ENCODE measurements at regions of chr6 and their contacts with region 1.

Region 1: DNA sequence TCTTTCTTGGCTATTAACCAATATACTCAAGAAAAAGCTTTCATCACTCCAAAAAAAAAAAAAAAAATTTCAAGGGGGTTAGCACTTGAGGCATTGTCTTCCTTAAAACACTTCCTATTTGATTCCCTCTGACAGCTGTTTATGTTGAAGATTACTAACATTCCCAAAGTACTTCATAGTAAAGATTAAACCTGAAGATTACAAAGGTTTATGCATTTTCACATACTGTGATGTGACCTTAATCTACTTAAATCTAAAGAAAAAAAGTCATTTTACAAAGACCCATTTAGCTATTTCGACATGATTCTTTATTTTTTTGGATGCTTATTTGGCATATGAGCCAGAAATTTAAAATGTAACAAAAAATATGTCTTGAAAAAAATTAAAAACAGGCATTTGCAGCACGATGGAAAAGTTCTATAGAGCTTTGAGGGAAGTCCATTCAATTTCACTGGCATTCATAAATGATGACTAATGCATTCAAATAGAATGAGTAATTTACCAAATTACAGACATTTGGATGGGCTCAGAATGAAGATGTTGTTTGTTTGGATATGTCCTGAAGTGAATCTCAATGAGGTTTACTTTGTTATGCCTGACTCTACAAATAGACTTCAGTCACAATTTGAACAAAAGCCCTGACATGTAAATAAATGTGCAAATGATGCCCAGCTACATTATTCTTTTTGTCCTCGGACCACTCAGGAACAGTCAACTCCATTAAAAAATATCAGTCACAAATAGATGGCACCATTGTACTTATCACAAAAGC is 674.6 kb upstream of the MARCKS start:
- DNase-seq: peak; percentile 82
- H3K4me3 ChIP-seq: peak overlapping the region in 1 of 3 experiments; percentile 38
- H3K27ac ChIP-seq: peak overlapping the region; percentile 87
- H3K4me1 ChIP-seq: peaks cover 29% of the 10 kb centered on the region
- H3K27me3 ChIP-seq: no peaks in the 10 kb centered on the region
- CTCF ChIP-seq: no peak
- POLR2A ChIP-seq: no peak

Region 2: DNA sequence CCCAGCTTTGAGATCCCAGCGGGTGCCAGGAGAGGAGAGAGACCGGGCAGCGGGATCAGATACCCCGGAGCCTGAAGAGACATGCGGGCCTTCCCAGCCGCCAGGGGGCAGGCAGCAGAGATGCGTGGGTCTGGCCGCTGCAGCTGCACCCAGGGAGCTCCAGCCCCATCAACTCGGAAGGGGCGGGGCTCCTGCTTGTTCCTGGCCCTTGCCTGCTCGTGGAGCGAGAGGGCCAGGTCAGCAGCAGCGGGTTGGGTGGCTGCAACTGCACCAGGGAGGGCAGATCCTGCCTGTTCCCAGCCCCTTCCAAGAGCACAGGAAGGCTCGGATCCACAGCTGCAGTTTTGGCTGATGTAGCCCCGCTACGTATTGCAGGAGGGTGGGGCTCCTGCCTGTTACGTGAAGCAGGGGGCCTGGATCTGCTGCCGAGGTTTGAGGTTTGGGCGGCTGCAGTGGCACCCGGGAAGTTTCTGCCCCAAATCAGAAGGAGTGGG is 302.6 kb before region 1 on chr6:
- CTCF ChIA-PET with region 1: no interaction called
- POLR2A ChIA-PET with region 1: no interaction called
- dilution Hi-C with region 1: no loop called
- intact Hi-C with region 1: loop called (anchors 5 kb)
- DNase-seq: no peak
- H3K4me3 ChIP-seq: no peak overlapping the region
- H3K27ac ChIP-seq: no peak overlapping the region
- H3K4me1 ChIP-seq: peaks cover 23% of the 10 kb centered on the region
- H3K27me3 ChIP-seq: no peaks in the 10 kb centered on the region
- CTCF ChIP-seq: no peak
- POLR2A ChIP-seq: no peak

Region 3: GRCh38 chr6:113018351-113019151 is 164.0 kb before region 1 on chr6:
- CTCF ChIA-PET with region 1: no interaction called
- POLR2A ChIA-PET with region 1: no interaction called
- dilution Hi-C with region 1: no loop called
- intact Hi-C with region 1: loop called (anchors 2 kb)
- DNase-seq: peak; percentile 96
- H3K4me3 ChIP-seq: peak overlapping the region in 1 of 3 experiments; percentile 5
- H3K27ac ChIP-seq: peak overlapping the region; percentile 96
- H3K4me1 ChIP-seq: peaks cover 24% of the 10 kb centered on the region
- H3K27me3 ChIP-seq: no peaks in the 10 kb centered on the region
- CTCF ChIP-seq: no peak
- POLR2A ChIP-seq: no peak

Region 4: DNA sequence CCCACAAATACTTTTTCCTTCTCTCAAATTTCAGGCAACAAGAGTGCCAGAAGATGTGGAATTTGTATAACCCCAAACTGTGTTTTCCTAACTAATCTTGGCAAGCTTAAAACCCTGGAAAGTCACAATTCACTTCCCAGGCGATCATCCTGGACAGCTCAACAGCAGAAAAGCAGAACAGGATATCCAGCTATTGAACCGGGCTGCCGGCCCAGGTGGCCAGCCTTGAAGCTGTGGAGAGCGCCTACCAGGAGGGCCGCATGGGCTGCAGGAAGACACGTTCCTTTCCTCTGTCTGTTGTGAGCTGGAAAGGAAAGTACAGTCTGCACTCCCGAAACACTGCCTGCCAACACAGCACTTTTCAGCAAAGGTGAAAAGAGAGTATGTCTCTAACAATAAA is 45.1 kb before region 1 on chr6:
- CTCF ChIA-PET with region 1: interaction called, 7 read pairs
- POLR2A ChIA-PET with region 1: no interaction called
- dilution Hi-C with region 1: no loop called
- intact Hi-C with region 1: loop called (anchors 1 kb)
- DNase-seq: peak; percentile 96
- H3K4me3 ChIP-seq: peak overlapping the region in 1 of 3 experiments; percentile 3
- H3K27ac ChIP-seq: peak overlapping the region; percentile 69
- H3K4me1 ChIP-seq: peaks cover 29% of the 10 kb centered on the region
- H3K27me3 ChIP-seq: no peaks in the 10 kb centered on the region
- CTCF ChIP-seq: no peak
- POLR2A ChIP-seq: no peak

Region 5: DNA sequence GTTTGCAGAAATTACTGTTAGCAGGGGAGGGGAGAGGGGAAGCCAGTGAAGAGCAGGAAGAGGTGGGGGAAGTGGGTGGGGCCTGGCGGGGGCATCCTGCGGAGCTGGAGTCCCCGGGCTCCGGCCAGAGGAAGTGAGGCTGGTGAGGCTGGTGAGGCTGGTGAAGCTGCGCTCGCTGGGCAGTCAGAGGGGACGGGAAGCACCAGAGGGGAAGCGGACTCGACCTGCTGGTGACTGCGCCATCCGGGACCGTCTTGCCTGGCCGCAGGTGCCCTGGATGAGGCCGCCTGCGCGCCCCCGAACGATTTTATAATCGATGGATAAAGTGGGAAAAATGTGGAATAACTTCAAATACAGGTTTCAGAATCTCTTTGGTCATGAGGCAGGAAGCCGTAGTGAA is 39.3 kb after region 1 on chr6:
- CTCF ChIA-PET with region 1: no interaction called
- POLR2A ChIA-PET with region 1: no interaction called
- dilution Hi-C with region 1: no loop called
- intact Hi-C with region 1: no loop called
- DNase-seq: no peak
- H3K4me3 ChIP-seq: no peak overlapping the region
- H3K27ac ChIP-seq: no peak overlapping the region
- H3K4me1 ChIP-seq: no peaks in the 10 kb centered on the region
- H3K27me3 ChIP-seq: no peaks in the 10 kb centered on the region
- CTCF ChIP-seq: no peak
- POLR2A ChIP-seq: no peak

Region 6: GRCh38 chr6:113276601-113277000 is 94.0 kb after region 1 on chr6:
- CTCF ChIA-PET with region 1: no interaction called
- POLR2A ChIA-PET with region 1: no interaction called
- dilution Hi-C with region 1: no loop called
- intact Hi-C with region 1: loop called (anchors 2 kb)
- DNase-seq: peak; percentile 62
- H3K4me3 ChIP-seq: peak overlapping the region in 1 of 3 experiments; percentile 34
- H3K27ac ChIP-seq: peak overlapping the region; percentile 30
- H3K4me1 ChIP-seq: peaks cover 23% of the 10 kb centered on the region
- H3K27me3 ChIP-seq: no peaks in the 10 kb centered on the region
- CTCF ChIP-seq: no peak
- POLR2A ChIP-seq: no peak

Region 7: DNA sequence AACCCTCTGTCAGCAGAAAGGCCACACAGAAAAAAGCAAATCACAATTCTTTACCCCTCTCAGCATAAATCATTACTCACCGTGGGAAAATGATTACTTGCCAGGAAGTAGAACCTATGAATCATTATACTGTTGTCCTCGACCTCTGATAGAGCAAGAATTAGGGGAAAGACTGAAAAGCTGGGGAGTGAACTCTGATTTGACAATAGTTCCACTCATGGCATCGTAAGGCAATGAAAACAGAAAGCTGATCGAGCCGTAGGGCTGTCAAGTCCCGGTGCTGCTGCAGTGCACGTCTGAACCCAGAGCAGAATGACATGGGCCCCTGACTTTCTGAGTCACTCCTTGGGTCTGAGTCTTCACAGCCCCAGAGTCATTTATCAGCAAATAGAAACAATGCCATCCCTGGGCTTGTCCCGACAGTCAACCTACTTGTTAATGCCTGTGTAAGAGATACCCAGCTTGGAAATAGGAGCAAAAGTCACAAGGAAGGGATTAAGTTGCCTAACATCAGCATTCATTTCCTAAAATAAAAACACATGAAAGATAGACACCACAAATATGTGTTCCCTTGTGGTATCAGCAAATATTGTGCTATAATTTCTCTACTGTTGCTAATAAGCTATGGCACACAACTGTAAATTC is 449.8 kb after region 1 on chr6:
- CTCF ChIA-PET with region 1: no interaction called
- POLR2A ChIA-PET with region 1: no interaction called
- dilution Hi-C with region 1: no loop called
- intact Hi-C with region 1: loop called (anchors 1 kb)
- DNase-seq: peak; percentile 99
- H3K4me3 ChIP-seq: peak overlapping the region in 2 of 3 experiments; percentile 6 to 33
- H3K27ac ChIP-seq: peak overlapping the region; percentile 83
- H3K4me1 ChIP-seq: peaks cover 22% of the 10 kb centered on the region
- H3K27me3 ChIP-seq: no peaks in the 10 kb centered on the region
- CTCF ChIP-seq: no peak
- POLR2A ChIP-seq: no peak

Region 8: GRCh38 chr6:113879186-113880096 is 696.9 kb after region 1 on chr6:
- CTCF ChIA-PET with region 1: interaction called, 7 read pairs
- POLR2A ChIA-PET with region 1: no interaction called
- dilution Hi-C with region 1: no loop called
- intact Hi-C with region 1: loop called (anchors 2 kb)
- DNase-seq: peak; percentile 91
- H3K4me3 ChIP-seq: peak overlapping the region in 1 of 3 experiments; percentile 69
- H3K27ac ChIP-seq: peak overlapping the region; percentile 63
- H3K4me1 ChIP-seq: peaks cover 9% of the 10 kb centered on the region
- H3K27me3 ChIP-seq: no peaks in the 10 kb centered on the region
- CTCF ChIP-seq: peak; percentile 68
- POLR2A ChIP-seq: no peak